ENCODE measurements at regions of chr15 and their contacts with region 1.

Region 1: DNA sequence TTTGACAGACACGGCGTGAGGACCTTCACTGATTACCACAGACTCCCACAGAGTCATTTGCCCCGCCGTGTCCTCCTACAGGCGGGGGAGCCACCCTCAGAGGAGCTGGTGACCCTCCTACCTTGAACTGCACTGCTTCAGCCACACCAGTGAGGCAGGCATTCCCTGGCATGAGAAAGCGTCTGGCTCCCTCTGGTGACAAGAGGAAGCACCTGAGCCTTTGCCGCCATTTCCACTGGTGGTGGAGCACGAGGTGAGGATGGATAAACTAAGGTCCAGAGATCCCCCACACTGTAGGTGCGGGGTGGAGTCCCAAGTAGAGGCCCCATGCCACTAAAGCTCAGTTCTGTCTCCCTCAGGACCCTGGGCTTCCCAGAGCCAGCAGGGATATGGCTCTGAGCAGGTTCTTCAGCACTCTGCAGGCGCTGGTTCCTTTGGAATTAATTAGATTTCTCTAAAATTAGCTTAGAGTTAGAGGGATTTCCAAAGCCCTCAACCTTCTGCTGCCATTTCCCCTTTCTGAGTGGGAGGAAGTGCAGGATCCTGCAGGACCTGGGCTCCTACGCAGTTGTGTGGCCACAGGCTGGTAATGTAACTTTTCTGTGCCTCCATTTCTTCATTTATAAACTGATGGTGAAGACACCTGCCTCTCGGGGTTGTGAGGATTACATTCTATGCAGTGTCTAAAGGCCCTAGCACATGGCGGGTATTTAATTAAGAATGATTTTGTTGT is 224.0 kb downstream of the SLCO3A1 start:
- DNase-seq: peak; percentile 77 to 88 (median 81)
- H3K4me3 ChIP-seq: no peak overlapping the region
- H3K27ac ChIP-seq: no peak overlapping the region
- H3K4me1 ChIP-seq: peaks cover 0 to 19% (median 2%) of the 10 kb centered on the region in 3 donors
- H3K27me3 ChIP-seq: no peaks in the 10 kb centered on the region
- CTCF ChIP-seq: peak; percentile 85

Region 2: DNA sequence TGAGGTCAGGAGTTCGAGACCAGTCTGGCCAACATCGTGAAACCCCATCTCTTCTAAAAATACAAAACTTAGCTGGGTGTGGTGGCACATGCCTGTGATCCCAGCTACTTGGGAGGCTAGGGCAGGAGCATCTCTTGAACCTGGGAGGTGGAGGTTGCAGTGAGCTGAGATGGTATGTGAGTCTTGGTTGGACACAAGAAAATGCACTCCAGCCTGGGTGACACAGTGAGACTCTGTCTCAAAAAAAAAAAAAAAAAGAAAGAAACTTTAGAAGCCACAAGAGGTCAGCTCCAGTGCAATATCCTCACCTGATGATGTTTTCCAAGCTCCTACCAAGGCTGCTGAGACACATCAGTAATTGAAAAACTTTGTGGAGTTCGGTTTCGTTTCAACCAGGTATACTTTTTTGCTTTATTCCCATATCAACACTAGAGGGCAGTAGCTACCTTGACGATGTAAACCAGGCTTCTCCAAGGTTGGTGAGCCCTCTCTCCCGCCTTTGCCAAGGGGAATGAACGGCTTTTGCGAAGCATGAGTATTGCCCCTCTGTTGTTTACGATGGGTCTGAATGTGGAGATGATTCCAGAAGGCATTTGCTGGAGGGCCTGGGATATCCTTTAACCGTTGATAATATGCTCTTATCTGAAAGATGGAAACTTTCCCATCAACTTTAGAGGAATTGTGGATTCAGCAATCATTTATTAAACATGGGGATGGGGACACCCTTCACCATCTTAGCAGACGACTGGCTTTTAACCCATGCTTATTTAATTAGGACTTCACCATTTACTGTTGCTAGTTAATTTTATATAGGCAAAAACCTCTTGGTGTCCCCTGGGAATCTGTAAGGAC is 774.7 kb before region 1 on chr15:
- intact Hi-C with region 1: loop called (anchors 10 kb)
- DNase-seq: peak in 4 of 5 donors; percentile 40 to 89 (median 71)
- H3K4me3 ChIP-seq: no peak overlapping the region
- H3K27ac ChIP-seq: no peak overlapping the region
- H3K4me1 ChIP-seq: no peaks in the 10 kb centered on the region
- H3K27me3 ChIP-seq: peaks cover 3% of the 10 kb centered on the region
- CTCF ChIP-seq: peak; percentile 51

Region 3: DNA sequence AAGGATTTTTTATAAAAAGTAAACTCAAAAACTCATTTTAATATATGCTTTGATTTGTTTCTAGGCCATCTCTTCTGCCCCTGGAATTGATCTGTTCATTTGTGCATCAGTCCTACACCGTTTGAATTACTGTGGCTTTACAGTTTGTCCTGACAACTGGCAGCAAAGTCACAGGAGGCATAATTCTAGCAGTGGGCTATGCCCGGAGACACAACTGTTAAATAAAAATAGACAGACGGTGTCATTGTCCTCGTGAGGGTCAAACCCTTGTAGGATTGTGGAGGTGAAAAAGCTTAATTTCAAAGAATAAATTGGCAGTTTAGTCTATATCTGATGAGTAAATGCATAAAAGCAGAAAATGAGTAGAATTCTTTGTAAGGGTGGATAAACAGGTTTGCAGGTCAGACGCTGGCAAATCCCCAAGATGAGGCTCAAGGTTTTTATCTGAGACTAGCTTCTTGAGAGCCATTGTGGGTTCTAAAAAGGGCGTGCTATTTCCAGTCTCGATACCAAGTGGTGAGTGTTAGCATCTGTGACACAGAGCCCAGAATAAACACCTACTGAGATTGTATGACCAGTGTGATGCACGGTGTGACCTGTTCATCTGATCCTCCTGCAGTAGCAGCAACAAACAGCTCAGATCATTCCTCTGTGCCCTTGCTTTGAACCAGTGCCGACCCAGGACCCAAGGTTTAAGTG is 275.5 kb before region 1 on chr15:
- intact Hi-C with region 1: no loop called
- DNase-seq: no peak
- H3K4me3 ChIP-seq: no peak overlapping the region
- H3K27ac ChIP-seq: no peak overlapping the region
- H3K4me1 ChIP-seq: no peaks in the 10 kb centered on the region
- H3K27me3 ChIP-seq: no peaks in the 10 kb centered on the region
- CTCF ChIP-seq: no peak

Region 4: DNA sequence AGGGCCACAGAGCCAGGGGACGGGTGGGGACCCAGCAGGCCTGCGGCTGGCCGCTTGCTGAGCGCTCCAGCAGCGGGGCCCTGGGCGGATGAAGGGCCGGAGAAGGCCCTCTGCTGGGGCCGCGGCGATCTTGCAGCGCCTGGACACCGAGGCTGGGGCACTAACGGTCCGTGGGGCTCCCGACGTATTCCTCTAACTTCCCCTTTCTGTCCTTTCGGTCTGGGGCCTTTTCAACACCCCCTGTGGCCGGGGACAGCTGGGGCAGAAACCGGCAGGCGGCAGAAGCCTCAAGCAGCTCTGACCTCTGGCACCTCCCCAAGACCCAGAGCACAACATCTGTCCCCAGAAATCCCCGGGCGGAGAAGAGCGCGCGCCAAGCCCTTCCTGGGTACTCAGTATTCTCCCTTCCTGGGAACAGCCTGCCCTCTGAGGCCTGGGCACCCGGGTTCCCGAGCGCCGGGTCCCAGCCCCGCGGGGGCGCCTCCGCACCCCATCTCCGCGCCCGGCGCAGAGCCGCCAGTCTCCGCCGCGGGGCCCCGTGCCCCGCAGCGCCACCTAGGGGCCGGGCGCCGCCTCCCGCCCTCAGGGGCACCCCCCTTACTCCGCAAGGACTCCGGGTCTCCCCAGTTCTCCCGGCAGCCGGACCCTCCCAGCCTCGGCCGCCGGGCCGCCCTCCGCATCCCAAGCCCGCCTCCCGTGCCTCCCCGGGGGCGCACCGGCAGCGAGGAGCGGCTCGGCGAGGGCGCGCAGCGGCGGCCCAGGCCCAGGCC is 224.6 kb before region 1 on chr15:
- intact Hi-C with region 1: loop called (anchors 10 kb)
- DNase-seq: peak; percentile 55 to 93 (median 70)
- H3K4me3 ChIP-seq: peak overlapping the region; percentile 30 to 60 (median 52)
- H3K27ac ChIP-seq: peak overlapping the region; percentile 68 to 76
- H3K4me1 ChIP-seq: peaks cover 0 to 9% (median 0%) of the 10 kb centered on the region in 3 donors
- H3K27me3 ChIP-seq: no peaks in the 10 kb centered on the region
- CTCF ChIP-seq: peak; percentile 36

Region 5: DNA sequence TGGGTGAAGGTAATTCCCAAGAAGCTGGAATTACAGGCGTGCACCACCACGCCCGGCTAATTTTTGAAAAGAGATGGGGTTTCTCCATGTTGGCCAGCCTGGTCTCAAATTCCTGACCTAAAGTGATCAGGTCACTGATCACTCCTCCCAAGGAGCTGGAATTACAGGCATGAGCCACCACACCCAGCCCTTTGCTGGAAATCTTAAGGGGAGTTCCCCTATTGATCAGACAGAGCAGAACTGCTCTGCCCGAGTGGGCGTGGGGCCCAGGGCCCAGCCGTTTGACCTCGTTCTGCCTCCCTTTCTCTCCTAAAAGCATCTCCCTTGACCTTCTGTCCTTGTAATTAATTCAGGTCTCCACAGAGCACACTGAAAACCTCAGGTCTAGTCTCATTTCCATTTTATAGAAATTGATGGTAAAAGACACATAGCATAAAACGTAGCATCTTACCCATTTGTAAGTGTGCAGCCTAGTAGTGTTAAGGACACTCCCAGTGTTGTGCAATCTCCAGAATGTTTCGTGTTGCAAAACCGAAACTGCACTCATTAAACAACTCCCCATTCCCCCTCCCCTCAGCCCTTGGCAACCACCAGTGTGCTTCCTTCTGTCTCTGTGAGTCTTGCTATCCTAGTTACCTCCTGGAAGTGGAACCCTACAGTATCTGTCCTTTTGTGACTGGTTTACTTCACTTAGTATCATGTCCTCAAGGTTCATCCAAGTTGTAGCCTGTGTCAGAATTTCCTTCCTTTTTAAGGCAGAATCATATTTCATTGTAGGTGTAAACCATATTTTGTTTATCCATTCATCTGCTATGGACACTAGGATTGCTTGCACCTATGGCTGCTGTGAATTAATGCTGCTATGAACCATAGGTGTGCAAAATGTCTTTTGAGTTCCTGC is 134.6 kb before region 1 on chr15:
- intact Hi-C with region 1: no loop called
- DNase-seq: peak in 4 of 5 donors; percentile 54 to 91 (median 83)
- H3K4me3 ChIP-seq: peak overlapping the region in 1 of 3 donors; percentile 13
- H3K27ac ChIP-seq: peak overlapping the region in 1 of 2 donors; percentile 69
- H3K4me1 ChIP-seq: peaks cover 0 to 42% (median 35%) of the 10 kb centered on the region in 3 donors
- H3K27me3 ChIP-seq: no peaks in the 10 kb centered on the region
- CTCF ChIP-seq: no peak